PC-3 (cell line): ENCODE measurements at regions of chr13 and their contacts with region 1.

Region 1: DNA sequence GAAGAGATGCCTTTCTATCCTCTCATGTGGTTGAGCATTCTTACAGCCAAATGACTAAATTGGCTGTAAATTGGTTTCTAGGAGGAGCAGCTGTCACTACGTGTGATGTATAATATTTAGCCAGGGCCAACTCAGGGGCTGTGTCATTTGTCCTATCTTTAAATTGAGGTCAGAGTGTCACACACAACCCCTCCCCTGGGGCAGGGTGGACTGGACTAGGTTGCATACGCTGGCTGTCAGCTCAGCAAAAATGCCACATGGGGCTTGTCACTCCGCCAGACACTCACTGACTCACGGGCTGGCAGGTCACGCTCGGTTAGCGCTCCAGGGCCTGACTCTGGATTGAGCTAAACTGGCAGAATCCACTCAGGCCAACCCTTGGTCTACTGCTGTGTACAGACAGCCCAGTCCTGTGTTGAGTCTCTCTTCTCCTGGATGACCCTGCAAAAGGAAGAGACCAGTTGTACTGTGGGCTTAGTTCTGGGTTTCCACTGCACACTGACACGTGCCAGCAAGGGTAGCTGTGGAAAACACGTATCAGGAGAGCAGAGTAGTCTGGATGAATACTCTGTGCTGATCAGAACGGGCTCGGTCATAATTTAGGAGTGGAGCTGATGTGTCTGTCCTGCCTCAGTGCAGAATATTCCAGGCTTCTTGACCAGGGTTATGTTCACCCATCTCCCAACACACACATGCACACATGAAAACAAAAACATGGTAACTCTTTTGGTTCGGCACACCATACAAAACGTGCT is 29.1 kb downstream of the SHISA2 start:
- DNase-seq: peak; percentile 97
- ATAC-seq: peak; percentile 87
- H3K4me3 ChIP-seq: no peak overlapping the region
- H3K27ac ChIP-seq: peak overlapping the region; percentile 99
- H3K4me1 ChIP-seq: peaks cover 57% of the 10 kb centered on the region
- H3K27me3 ChIP-seq: no peaks in the 10 kb centered on the region
- CTCF ChIP-seq: no peak

Region 2: DNA sequence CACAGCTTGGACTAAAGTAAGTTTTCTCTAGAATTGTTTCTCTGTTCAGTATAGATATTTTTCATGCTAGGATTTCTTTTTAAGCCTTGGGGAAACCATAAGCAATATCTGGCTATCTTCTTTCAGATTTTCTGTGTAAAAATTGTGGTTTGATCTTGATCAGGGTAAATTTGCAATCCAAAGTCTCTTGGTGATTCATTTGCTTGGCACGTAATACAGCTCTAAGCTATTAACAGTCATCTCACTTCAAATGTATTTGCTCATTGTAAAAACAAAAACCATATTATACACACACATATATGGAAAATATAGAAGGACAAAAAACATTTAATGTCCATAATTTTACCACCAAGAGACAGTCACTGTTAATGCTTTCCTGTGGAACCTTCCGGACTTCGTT is 161.9 kb before region 1 on chr13:
- CTCF ChIA-PET with region 1: no interaction called
- POLR2A ChIA-PET with region 1: no interaction called
- intact Hi-C with region 1: loop called (anchors 2 kb)
- DNase-seq: peak; percentile 87
- ATAC-seq: peak; percentile 72
- H3K4me3 ChIP-seq: no peak overlapping the region; the same call in 1 of the 2 replicates
- H3K27ac ChIP-seq: peak overlapping the region; percentile 89
- H3K4me1 ChIP-seq: peaks cover 47% of the 10 kb centered on the region
- H3K27me3 ChIP-seq: no peaks in the 10 kb centered on the region
- CTCF ChIP-seq: no peak

Region 3: DNA sequence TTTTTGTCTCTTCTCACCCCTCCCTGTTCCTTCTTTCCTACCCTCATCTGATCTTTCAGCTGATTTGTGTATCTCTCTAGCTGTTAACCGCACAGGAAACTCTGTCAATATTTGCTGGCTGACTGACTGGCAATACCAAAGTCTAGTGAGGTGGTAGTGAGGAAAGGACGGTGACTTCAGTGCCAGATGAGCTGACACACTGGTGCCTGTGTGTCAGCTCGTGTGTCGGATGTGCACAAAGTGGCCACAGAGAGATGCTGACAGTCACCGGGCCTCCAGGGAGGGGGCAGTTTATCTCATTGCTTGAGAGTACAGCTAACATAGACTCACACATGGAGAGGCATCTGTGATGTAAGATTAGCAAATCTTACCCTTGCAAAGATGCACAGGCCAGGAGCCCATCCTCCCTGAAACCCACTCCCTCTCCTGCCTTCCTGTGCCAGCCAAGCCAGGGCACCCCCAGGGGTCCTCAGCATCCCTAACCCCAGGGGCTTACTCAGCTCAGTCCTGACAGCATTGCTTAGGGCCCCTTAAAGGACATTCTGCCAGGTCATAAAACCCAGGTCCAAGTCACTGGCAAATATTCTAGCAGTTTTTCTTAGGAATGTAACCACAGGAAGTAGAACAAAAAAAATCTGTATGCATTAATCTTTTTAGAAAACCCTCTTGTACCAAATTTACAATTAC is 51.1 kb before region 1 on chr13:
- CTCF ChIA-PET with region 1: no interaction called
- POLR2A ChIA-PET with region 1: no interaction called
- intact Hi-C with region 1: loop called (anchors 5 kb)
- DNase-seq: peak; percentile 32
- ATAC-seq: peak; percentile 79
- H3K4me3 ChIP-seq: no peak overlapping the region
- H3K27ac ChIP-seq: no peak overlapping the region
- H3K4me1 ChIP-seq: peaks cover 11% of the 10 kb centered on the region; the same call in 1 of the 2 replicates
- H3K27me3 ChIP-seq: no peaks in the 10 kb centered on the region
- CTCF ChIP-seq: no peak

Region 4: GRCh38 chr13:26179344-26179743 is 156.6 kb after region 1 on chr13:
- CTCF ChIA-PET with region 1: no interaction called
- POLR2A ChIA-PET with region 1: no interaction called
- intact Hi-C with region 1: no loop called
- DNase-seq: no peak
- ATAC-seq: no peak
- H3K4me3 ChIP-seq: no peak overlapping the region
- H3K27ac ChIP-seq: no peak overlapping the region
- H3K4me1 ChIP-seq: no peaks in the 10 kb centered on the region
- H3K27me3 ChIP-seq: 0 out of 2 replicates have a peak, but pooled peaks cover 3% of the 10 kb centered on the region
- CTCF ChIP-seq: no peak

Region 5: GRCh38 chr13:26727633-26728032 is 704.9 kb after region 1 on chr13:
- CTCF ChIA-PET with region 1: no interaction called
- POLR2A ChIA-PET with region 1: no interaction called
- intact Hi-C with region 1: no loop called
- DNase-seq: peak; percentile 56
- ATAC-seq: 0 out of 2 replicates have a peak, but pooled peaks have one; percentile 22
- H3K4me3 ChIP-seq: no peak overlapping the region
- H3K27ac ChIP-seq: no peak overlapping the region
- H3K4me1 ChIP-seq: no peaks in the 10 kb centered on the region
- H3K27me3 ChIP-seq: peaks cover 11% of the 10 kb centered on the region
- CTCF ChIP-seq: no peak